ENCODE measurements at regions of chr13 and their contacts with region 1.

Region 1: GRCh38 chr13:48975856-48976575 is at the start of gene FNDC3A:
- DNase-seq: peak; percentile 86 to 92 (median 89)
- ATAC-seq: peak; percentile 89 to 95 (median 92)
- H3K4me3 ChIP-seq: peak within 1 kb of the TSS; percentile 66 to 96 (median 88)
- H3K27ac ChIP-seq: peak within 1 kb of the TSS; percentile 92 to 100 (median 98)
- H3K4me1 ChIP-seq: peaks cover 0 to 49% (median 32%) of the 10 kb centered on the region in 12 donors
- H3K27me3 ChIP-seq: no peaks in the 10 kb centered on the region
- CTCF ChIP-seq: peak in 6 of 12 donors; percentile 11 to 38 (median 32)
- POLR2A ChIP-seq: peak in 1 of 2 donors; percentile 39
- total RNA-seq, gene FNDC3A: 16.9 to 38.3 (median 22.7) TPM

Region 2: GRCh38 chr13:48037346-48038173 is 938.5 kb before region 1 on chr13 and contains the start of gene NUDT15:
- intact Hi-C with region 1: loop called in 2 of 10 experiments (anchors 5 to 10 kb)
- DNase-seq: peak; percentile 93 to 96 (median 94)
- ATAC-seq: peak; percentile 97 to 99 (median 99)
- H3K4me3 ChIP-seq: peak within 1 kb of the TSS; percentile 43 to 85 (median 71)
- H3K27ac ChIP-seq: peak within 1 kb of the TSS; percentile 78 to 99 (median 96)
- H3K4me1 ChIP-seq: peaks cover 2 to 22% (median 12%) of the 10 kb centered on the region in 12 donors
- H3K27me3 ChIP-seq: no peaks in the 10 kb centered on the region
- CTCF ChIP-seq: peak; percentile 91 to 100 (median 96)
- POLR2A ChIP-seq: peak; percentile 7 to 79
- total RNA-seq, gene NUDT15: 6.8 to 12.6 (median 10.4) TPM

Region 3: GRCh38 chr13:48344264-48344663 is 631.8 kb before region 1 on chr13:
- intact Hi-C with region 1: loop called in 1 of 10 experiments (anchors 5 kb)
- DNase-seq: peak in 1 of 5 donors; percentile 36
- ATAC-seq: no peak
- H3K4me3 ChIP-seq: no peak overlapping the region
- H3K27ac ChIP-seq: no peak overlapping the region
- H3K4me1 ChIP-seq: no peaks in the 10 kb centered on the region
- H3K27me3 ChIP-seq: no peaks in the 10 kb centered on the region
- CTCF ChIP-seq: no peak
- POLR2A ChIP-seq: no peak

Region 4: GRCh38 chr13:48783181-48783630 is 192.8 kb before region 1 on chr13:
- intact Hi-C with region 1: loop called in 2 of 10 experiments (anchors 10 kb)
- DNase-seq: peak; percentile 61 to 92 (median 78)
- ATAC-seq: peak; percentile 86 to 94 (median 92)
- H3K4me3 ChIP-seq: no peak overlapping the region
- H3K27ac ChIP-seq: peak overlapping the region in 9 of 12 donors; percentile 8 to 74 (median 45)
- H3K4me1 ChIP-seq: peaks cover 0 to 15% (median 2%) of the 10 kb centered on the region in 12 donors
- H3K27me3 ChIP-seq: no peaks in the 10 kb centered on the region
- CTCF ChIP-seq: no peak
- POLR2A ChIP-seq: no peak

Region 5: GRCh38 chr13:49098771-49099512 is 122.9 kb after region 1 on chr13:
- intact Hi-C with region 1: loop called in 6 of 10 experiments (anchors 2 to 10 kb)
- DNase-seq: no peak
- ATAC-seq: peak in 3 of 4 donors; percentile 49 to 50 (median 50)
- H3K4me3 ChIP-seq: no peak overlapping the region
- H3K27ac ChIP-seq: peak overlapping the region; percentile 11 to 87 (median 75)
- H3K4me1 ChIP-seq: peaks cover 8 to 44% (median 28%) of the 10 kb centered on the region in 12 donors
- H3K27me3 ChIP-seq: no peaks in the 10 kb centered on the region
- CTCF ChIP-seq: peak; percentile 35 to 64 (median 48)
- POLR2A ChIP-seq: no peak

Region 6: GRCh38 chr13:49110122-49110912 is 134.3 kb after region 1 on chr13:
- intact Hi-C with region 1: loop called in 4 of 10 experiments (anchors 2 to 10 kb)
- DNase-seq: peak; percentile 81 to 93 (median 84)
- ATAC-seq: peak; percentile 81 to 89 (median 82)
- H3K4me3 ChIP-seq: peak overlapping the region; percentile 15 to 75 (median 63)
- H3K27ac ChIP-seq: peak overlapping the region; percentile 3 to 79 (median 50)
- H3K4me1 ChIP-seq: peaks cover 3 to 58% (median 30%) of the 10 kb centered on the region in 12 donors
- H3K27me3 ChIP-seq: no peaks in the 10 kb centered on the region
- CTCF ChIP-seq: no peak
- POLR2A ChIP-seq: no peak

Region 7: DNA sequence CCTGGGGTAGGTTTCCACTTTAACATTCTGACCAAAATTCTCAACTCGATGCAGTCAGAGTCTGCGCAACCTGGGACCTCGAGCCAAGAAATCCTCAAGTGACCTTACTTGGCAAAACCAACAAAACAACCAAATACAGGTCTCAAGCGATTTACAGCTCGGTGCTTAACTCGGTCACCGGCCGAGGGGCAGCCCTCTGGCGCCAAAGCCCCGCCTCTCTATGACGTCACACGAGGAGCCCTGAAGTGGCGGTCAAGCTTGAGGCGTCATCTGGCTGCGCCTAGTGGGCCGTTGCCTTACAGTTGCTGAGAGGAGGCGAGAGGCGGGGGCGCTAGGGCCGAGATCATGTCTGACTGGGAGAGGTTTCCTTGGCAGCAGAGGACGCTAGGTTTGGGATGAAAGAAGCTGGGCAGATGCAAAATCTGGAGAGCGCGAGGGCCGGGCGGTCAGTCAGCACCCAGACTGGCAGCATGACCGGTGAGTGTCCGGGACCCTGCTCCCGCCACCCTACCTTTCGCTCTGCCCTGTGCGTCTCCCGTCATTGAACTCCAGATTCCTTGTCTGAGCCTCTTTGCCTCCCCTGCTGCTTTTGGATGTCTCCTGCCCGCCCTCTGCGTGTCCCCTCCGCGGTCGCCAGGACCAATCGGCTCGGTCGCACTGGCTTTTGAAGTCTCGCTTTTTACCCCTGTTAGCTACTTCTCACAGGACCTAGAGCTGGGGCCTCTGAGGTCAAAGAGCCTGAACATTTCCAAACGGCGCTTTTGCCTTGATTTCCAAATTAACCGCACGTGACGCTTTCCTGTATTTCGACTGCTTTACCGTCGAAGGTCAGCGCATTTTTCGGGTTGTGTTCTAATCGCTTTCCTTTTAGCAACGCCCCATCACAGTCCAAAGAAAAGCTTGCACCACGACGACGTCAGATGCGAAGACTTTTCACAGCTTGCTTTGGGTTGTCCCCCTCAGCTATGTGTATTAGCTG is 271.9 kb after region 1 on chr13 and contains the start of gene CDADC1:
- intact Hi-C with region 1: loop called in 1 of 10 experiments (anchors 10 kb)
- DNase-seq: peak; percentile 97 to 99 (median 98)
- ATAC-seq: peak; percentile 96 to 99 (median 98)
- H3K4me3 ChIP-seq: peak within 1 kb of the TSS; percentile 62 to 97 (median 84)
- H3K27ac ChIP-seq: peak within 1 kb of the TSS; percentile 74 to 93 (median 90)
- H3K4me1 ChIP-seq: peaks cover 0 to 40% (median 14%) of the 10 kb centered on the region in 12 donors
- H3K27me3 ChIP-seq: no peaks in the 10 kb centered on the region
- CTCF ChIP-seq: peak in 1 of 12 donors; percentile 10
- POLR2A ChIP-seq: peak in 1 of 2 donors; percentile 74
- total RNA-seq, gene CDADC1: 2.8 to 10.8 (median 10.3) TPM